H1 (cell line): ENCODE measurements at regions of chr7 and their contacts with region 1.

Region 1: GRCh38 chr7:149161241-149161848 is 14.1 kb downstream of the ZNF398 start:
- DNase-seq: no peak
- H3K4me3 ChIP-seq: no peak overlapping the region
- H3K27ac ChIP-seq: no peak overlapping the region
- H3K4me1 ChIP-seq: no peaks in the 10 kb centered on the region
- H3K27me3 ChIP-seq: no peaks in the 10 kb centered on the region
- CTCF ChIP-seq: no peak
- EP300 ChIP-seq: no peak
- POLR2A ChIP-seq: no peak
- RAD21 ChIP-seq: no peak

Region 2: DNA sequence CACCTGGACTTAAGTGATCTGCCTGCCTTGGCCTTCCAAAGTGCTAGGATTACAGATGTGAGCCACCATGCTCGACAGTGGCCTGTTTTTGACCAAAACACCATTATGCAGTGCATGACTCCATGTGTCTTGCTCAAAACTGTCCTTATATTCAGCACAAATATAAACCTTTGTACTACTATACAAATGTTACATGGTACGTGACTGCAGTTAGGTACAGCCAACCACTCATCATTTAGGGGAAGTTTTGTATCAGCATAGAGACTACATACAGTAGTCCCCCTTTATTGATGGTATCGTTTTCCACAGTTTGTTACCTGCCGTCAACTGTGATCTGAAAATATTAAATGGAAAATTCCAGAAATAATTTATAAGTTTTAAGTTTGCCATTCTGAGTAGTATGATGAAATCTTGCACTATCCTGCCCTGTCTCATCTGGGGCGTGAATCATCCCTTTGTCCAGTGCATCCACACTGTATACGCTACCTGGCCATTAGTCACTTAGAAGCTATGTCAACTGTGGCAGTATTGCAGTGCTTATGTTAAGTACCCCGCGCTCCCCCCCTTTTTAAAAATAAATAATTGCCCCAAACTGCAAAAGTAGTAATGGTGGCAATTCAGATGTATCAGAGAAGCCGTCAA is 10.7 kb after region 1 on chr7:
- CTCF ChIA-PET with region 1: interaction called, 4 read pairs
- POLR2A ChIA-PET with region 1: interaction called, 29 read pairs
- DNase-seq: no peak
- H3K4me3 ChIP-seq: no peak overlapping the region
- H3K27ac ChIP-seq: no peak overlapping the region
- H3K4me1 ChIP-seq: no peaks in the 10 kb centered on the region
- H3K27me3 ChIP-seq: no peaks in the 10 kb centered on the region
- CTCF ChIP-seq: no peak
- EP300 ChIP-seq: no peak
- POLR2A ChIP-seq: no peak
- RAD21 ChIP-seq: no peak

Region 3: GRCh38 chr7:149257146-149257545 is 95.8 kb after region 1 on chr7:
- CTCF ChIA-PET with region 1: no interaction called
- POLR2A ChIA-PET with region 1: no interaction called
- DNase-seq: no peak
- H3K4me3 ChIP-seq: no peak overlapping the region
- H3K27ac ChIP-seq: no peak overlapping the region
- H3K4me1 ChIP-seq: no peaks in the 10 kb centered on the region
- H3K27me3 ChIP-seq: peaks cover 0 to 2% (median 1%) of the 10 kb centered on the region in 4 experiments; a peak in 1 of 7 replicates
- CTCF ChIP-seq: no peak
- EP300 ChIP-seq: no peak
- POLR2A ChIP-seq: no peak
- RAD21 ChIP-seq: no peak

Region 4: DNA sequence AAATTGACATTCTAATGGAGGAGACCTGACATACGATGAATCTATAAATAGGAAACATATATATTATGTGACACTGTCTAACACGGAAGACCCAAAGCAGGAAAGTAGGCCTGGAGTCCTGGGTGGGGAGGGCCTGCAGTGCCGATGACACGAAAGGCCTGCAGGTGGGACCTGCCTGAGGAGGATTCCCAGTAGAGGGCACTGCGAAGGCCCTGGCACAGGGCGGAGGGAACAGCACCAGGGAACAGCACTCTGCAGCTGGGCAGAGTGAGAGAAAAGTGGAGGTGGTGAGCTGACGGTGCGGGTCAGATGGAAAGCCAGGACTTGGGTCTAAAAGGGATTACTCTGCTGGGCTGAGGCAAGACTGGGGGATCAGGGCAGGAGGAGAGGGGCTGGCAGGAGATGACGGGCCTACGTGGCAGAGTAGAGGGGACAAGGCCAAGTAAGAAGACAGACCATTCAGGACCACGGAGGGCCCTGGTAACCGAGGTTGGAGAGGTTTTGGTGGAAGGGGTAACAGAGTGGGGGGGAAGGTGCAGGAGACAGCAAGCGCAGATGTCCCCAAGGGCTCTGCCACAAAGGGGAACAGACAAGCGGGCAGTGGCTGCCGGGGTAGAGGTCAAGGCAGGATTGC is 328.2 kb after region 1 on chr7:
- CTCF ChIA-PET with region 1: no interaction called
- POLR2A ChIA-PET with region 1: no interaction called
- DNase-seq: no peak
- H3K4me3 ChIP-seq: no peak overlapping the region
- H3K27ac ChIP-seq: no peak overlapping the region
- H3K4me1 ChIP-seq: no peaks in the 10 kb centered on the region
- H3K27me3 ChIP-seq: no peaks in the 10 kb centered on the region
- CTCF ChIP-seq: peak; percentile 71 to 84 (median 71)
- EP300 ChIP-seq: peak in 1 of 2 experiments; percentile 14; a peak in 1 of 3 replicates
- POLR2A ChIP-seq: no peak
- RAD21 ChIP-seq: peak; percentile 32 to 57